ENCODE measurements at regions of chr3 and their contacts with region 1.

Region 1: DNA sequence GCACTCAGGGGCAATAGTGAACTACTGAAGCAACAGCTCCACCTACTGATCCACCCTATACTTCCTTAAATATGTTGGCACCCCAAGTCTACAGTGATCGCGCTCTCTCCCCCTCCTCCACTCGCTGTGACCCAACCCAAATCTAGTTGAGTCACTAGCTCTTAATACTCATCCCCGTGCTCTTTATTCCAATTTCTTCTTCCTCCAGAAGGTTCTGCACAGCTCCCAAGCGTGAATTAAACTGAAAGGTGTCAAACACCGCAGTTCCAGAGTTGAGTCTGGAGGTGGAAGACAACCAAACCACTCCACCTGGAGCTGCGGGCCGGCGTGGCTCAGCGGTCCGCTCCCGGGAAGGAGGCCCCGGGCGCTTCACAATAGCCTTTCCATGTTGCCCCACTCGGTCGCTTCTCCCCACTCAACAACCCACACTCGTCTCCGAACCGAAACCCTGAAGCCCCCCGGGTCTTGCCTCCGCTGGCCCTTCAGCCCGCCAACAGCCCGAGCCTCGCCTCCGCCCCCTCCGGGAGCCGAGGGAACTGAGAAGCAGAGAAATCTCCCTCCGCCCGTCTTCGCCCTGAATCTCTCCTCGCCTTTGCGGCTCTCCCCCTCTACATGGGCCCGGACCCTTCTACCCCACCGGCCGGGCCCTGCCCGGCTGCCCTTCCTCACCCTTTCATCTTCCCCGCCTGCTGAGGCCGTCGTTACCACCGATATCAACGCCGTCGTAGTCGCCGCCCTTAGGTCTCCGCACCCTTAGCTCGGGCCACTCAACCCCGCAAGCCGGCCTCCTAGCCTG is 578 bp downstream of the NAA50 start:
- DNase-seq: peak; percentile 80
- CTCF ChIP-seq: peak; percentile 66

Region 2: GRCh38 chr3:113730550-113730949 is 14.9 kb before region 1 on chr3:
- CTCF ChIA-PET with region 1: interaction called, 64 read pairs
- POLR2A ChIA-PET with region 1: interaction called, 3 read pairs
- DNase-seq: no peak
- CTCF ChIP-seq: no peak

Region 3: GRCh38 chr3:113758389-113759024 is 13.0 kb after region 1 on chr3:
- CTCF ChIA-PET with region 1: interaction called, 27 read pairs
- POLR2A ChIA-PET with region 1: interaction called, 4 read pairs
- DNase-seq: no peak
- CTCF ChIP-seq: no peak

Region 4: GRCh38 chr3:113825090-113825489 is 79.6 kb after region 1 on chr3:
- CTCF ChIA-PET with region 1: interaction called, 13 read pairs
- POLR2A ChIA-PET with region 1: no interaction called
- DNase-seq: peak; percentile 68
- CTCF ChIP-seq: no peak

Region 5: DNA sequence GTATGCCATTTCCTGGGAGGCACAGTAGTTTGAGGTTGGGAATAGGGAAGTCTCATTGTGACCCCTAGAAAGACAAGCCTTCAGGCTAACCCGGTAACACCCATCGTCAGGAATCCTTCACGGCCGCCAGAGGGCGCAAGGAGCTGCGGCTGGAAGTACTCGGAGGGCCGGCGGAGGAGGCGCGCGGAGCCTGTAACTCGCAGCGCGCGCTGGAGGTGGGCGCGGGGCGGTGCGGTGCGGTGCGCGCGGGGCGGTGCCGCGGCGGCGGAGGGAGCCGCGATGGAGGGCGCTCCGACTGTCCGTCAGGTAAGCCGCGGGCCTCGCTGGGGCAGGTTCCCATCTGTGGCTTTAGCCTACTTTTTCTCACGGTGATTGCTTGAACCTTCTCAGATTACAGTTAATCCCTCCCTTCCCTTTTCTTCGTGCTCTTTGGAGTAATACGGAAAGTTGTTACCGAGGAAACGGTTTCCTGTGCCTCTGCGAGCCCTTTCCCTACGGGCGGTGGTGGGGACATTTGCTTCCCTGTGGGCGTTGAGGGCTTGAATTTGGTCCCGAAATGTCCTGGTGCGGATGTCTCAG is 93.2 kb after region 1 on chr3 and contains the start of gene GRAMD1C:
- CTCF ChIA-PET with region 1: interaction called, 16 read pairs
- POLR2A ChIA-PET with region 1: no interaction called
- DNase-seq: peak; percentile 88
- CTCF ChIP-seq: peak; percentile 96

Measured in GM10248 (cell line).